Left cardiac atrium (tissue), 4 donors: ENCODE measurements at regions of chr10 and their contacts with region 1.

Region 1: DNA sequence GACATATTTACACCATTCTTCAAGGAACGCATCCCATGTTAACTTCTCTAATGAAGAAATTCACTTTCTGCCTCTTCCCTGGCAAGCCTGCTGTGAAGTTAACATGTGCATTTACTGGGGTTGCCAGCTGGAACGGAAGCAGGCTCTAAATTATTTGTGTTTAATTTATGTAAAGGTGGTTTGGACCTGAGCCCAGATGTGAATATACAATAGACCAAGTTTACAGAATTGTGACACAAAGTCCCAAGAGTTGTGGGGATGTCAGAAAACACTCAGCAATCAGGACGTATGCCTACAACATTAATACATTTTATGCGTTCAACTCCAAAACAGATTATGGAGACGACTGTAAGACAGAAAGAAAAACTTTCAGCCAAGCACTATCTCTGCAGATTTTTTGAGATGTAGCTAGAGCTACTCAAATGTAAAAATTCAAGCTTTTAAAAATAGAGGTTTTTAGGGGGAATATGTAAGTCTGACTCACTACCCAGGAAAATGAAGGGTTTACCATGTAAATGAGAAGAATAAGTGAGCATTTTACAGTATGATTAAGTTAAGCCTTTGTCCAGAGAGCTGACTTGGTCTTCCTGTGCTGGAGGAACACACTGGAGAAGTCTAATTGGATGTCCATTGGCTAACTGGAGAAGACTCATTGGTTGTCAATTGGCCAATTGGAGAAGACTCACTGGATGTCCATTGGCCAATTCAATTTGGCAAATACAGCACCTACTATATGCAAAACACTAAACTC is 19.5 kb downstream of the NRP1 start:
- DNase-seq: no peak
- ATAC-seq: no peak

Region 2: DNA sequence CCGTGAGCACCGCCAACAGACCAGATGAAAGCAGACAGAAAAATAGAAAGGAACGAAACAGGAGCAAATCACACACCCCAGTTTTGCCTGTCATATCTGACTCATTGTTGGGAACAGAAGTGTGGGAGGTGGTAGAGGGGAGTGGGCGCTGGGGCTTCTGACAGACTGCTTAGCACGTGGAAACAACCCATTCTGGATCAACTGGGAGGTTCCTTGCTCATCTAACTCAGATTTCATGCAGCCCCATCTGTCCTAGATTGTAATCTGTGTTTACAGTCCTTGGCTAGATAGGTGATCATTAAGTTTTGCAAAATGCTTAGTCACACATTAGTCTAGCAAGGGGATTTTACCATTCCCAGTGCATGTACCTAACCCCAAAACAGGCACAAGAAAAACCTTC is 134.6 kb before region 1 on chr10:
- intact Hi-C with region 1: no loop called
- DNase-seq: no peak
- ATAC-seq: no peak

Region 3: DNA sequence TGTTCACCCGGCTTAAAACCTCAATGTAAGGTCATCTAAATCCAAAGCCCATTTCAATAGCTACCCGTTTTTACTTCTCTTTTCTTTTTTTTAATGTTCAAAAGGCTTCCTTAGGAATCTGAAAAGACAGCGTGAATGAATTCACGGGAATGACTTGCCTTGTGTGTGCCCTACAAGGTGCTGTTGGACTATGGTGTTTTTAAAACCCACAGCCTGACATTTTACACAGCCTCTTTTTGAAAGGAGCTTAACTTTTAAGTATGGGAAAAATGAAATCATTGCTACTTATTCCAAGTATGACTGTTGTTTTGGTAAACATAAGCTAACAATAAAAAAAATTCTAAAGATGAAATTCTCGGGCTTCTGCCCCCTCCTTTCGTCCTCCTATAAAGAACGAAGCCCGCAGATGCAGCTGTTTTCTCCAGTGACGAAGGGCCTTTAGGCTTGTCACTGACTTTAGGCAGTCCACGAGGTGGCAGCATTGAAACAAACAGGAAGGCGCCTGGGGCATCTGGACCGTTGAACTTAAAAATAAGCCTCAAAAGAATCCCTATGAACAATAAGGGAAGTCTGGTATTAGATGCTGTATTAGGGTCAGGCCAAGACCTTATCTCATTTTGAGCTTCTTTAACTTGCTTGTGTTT is 121.8 kb before region 1 on chr10:
- intact Hi-C with region 1: loop called in 1 of 2 experiments (anchors 5 kb)
- DNase-seq: peak; percentile 88
- ATAC-seq: peak; percentile 87 to 88

Region 4: DNA sequence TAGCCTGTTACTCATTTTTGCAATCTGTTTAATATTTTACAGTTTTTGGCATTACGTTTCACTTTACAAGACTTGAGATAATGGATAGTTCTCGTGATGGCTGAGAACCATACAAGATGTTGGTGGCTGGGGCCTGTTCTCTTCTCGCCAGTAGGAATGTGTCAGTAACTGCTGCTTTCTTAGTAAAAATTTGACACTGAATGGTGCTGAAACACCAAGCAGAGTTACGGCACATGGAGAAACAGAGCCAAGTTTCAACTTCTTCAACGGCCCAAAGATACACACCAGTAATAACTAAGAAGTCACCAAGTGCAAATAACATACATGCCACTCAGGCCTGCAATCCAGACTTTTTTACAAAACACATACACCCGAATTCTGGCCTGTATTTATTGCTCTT is 110.9 kb before region 1 on chr10:
- intact Hi-C with region 1: loop called in 1 of 2 experiments (anchors 10 kb)
- DNase-seq: no peak
- ATAC-seq: peak; percentile 42 to 74

Region 5: DNA sequence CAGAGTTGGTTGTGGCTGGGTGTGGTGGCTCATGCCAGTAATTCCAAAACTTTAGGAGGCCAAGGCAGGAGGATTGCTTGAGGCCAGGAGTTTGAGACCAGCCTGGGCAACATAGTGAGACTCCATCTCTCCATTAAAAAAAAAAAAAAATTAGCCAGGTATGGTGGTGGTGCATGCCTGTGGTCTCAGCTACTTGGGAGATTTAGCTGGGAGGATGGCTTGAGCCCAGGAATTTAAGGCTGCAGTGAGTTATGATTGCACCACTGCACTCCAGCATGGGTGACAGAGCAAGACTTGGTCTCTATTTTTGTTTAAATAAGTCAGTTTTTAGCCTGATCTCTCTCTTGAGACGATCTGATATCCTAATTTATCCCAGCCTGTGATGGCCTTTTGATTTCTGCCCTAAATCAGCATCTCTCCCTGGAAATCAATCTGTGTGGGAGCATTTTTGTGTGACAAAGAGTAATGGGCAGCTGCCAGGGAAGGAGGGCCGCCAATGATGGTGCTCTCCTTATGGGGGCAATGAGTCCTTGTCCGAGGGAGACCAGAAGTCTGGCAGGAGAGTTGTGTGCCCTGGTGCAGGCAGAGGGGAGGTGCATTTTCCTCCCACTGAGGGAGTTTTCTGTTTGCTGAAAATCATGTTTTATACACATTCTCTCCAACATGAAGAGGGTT is 91.5 kb before region 1 on chr10:
- intact Hi-C with region 1: no loop called
- DNase-seq: no peak
- ATAC-seq: peak; percentile 11 to 63

Region 6: GRCh38 chr10:33352175-33352574 is 37.2 kb after region 1 on chr10:
- intact Hi-C with region 1: no loop called
- DNase-seq: no peak
- ATAC-seq: no peak